ENCODE measurements at regions of chr3 and their contacts with region 1.

Region 1: DNA sequence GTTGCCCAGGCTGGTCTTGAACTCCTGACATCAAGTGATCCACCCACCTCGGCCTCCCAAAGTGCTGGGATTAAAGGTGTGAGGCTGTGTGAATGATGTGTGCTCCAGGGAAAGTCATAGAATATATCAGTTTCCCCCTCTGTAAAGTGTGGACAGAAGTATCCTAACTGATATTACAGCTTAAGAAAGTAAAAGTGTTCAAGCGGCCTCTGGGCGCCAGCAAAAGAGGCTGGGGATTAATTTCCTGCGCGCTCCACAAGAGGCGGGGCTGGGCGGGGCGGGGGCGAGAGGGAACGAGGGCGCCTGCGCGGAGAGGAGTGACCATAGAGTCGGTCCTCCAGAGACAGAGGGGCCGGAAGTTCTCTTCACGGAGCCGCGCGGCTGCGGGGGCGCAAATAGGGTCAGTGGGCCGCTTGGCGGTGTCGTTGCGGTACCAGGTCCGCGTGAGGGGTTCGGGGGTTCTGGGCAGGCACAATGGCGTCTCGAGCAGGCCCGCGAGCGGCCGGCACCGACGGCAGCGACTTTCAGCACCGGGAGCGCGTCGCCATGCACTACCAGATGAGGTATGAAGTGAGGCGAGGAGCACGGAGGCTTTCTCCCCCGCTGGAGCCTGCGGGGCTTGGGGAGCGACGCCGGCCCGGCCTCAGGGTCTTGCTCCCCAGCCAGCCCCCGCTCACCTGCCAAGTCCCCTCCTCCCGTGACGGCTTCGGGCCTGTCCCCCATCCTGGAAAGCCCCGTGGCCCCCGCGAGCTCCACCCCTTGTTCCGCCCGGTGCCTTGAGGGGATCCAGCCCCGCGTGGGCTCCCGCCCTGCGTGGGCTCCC is at the start of gene JAGN1:
- DNase-seq: peak; percentile 87 to 92 (median 89)
- H3K4me3 ChIP-seq: peak within 1 kb of the TSS; percentile 56 to 93
- H3K4me3 Mint-ChIP-seq: peak within 1 kb of the TSS; percentile 94 to 100 (median 98)
- H3K27ac ChIP-seq: peak within 1 kb of the TSS; percentile 100
- H3K27ac Mint-ChIP-seq: peak within 1 kb of the TSS; percentile 99 to 100 (median 99)
- H3K4me1 ChIP-seq: peaks cover 39% of the 10 kb centered on the region
- H3K4me1 Mint-ChIP-seq: peaks cover 22 to 51% (median 34%) of the 10 kb centered on the region in 4 donors
- H3K27me3 ChIP-seq: no peaks in the 10 kb centered on the region
- H3K27me3 Mint-ChIP-seq: no peaks in the 10 kb centered on the region
- total RNA-seq, gene JAGN1: 26.5 to 29.1 TPM

Region 2: DNA sequence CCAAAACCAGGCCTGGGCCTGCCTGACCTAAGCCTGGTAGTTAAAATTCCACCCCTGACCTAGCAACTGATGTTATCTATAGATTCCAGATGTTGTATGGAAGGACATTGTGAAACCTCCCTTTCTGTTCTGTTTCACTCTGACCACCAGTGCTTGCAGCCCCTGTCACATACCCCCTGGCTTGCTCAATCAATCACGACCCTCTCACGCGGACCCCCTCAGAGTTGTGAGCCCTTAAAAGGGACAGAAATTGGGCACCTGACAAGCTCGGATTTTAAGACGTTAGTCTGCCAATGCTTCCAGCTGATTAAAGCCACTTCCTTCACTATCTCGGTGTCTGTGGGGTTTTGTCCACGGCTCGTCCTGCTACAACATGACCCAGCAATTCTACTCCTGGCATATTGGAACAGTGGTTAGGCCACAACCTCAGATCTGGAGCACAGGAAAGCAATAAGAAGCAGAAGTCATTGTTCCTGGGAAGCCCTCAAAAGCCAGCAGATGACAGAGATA is 300.1 kb before region 1 on chr3:
- CTCF ChIA-PET with region 1: no interaction called
- POLR2A ChIA-PET with region 1: no interaction called
- intact Hi-C with region 1: no loop called
- DNase-seq: no peak
- H3K4me3 ChIP-seq: no peak overlapping the region
- H3K4me3 Mint-ChIP-seq: no peak overlapping the region
- H3K27ac ChIP-seq: no peak overlapping the region
- H3K27ac Mint-ChIP-seq: no peak overlapping the region
- H3K4me1 ChIP-seq: no peaks in the 10 kb centered on the region
- H3K4me1 Mint-ChIP-seq: peaks cover 0 to 5% (median 0%) of the 10 kb centered on the region in 4 donors
- H3K27me3 ChIP-seq: no peaks in the 10 kb centered on the region
- H3K27me3 Mint-ChIP-seq: peaks cover 12 to 13% of the 10 kb centered on the region in 2 donors

Region 3: GRCh38 chr3:9649791-9650521 is 240.5 kb before region 1 on chr3:
- CTCF ChIA-PET with region 1: no interaction called
- POLR2A ChIA-PET with region 1: interaction called, 7 read pairs
- intact Hi-C with region 1: loop called (anchors 1 kb)
- DNase-seq: peak in 1 of 5 donors; percentile 46
- H3K4me3 ChIP-seq: peak overlapping the region; percentile 97
- H3K4me3 Mint-ChIP-seq: peak overlapping the region; percentile 91 to 99 (median 96)
- H3K27ac ChIP-seq: peak overlapping the region; percentile 77
- H3K27ac Mint-ChIP-seq: peak overlapping the region; percentile 89 to 97 (median 91)
- H3K4me1 ChIP-seq: peaks cover 37% of the 10 kb centered on the region
- H3K4me1 Mint-ChIP-seq: peaks cover 19 to 50% (median 30%) of the 10 kb centered on the region in 4 donors
- H3K27me3 ChIP-seq: no peaks in the 10 kb centered on the region
- H3K27me3 Mint-ChIP-seq: peaks cover 0 to 1% of the 10 kb centered on the region in 2 donors

Region 4: DNA sequence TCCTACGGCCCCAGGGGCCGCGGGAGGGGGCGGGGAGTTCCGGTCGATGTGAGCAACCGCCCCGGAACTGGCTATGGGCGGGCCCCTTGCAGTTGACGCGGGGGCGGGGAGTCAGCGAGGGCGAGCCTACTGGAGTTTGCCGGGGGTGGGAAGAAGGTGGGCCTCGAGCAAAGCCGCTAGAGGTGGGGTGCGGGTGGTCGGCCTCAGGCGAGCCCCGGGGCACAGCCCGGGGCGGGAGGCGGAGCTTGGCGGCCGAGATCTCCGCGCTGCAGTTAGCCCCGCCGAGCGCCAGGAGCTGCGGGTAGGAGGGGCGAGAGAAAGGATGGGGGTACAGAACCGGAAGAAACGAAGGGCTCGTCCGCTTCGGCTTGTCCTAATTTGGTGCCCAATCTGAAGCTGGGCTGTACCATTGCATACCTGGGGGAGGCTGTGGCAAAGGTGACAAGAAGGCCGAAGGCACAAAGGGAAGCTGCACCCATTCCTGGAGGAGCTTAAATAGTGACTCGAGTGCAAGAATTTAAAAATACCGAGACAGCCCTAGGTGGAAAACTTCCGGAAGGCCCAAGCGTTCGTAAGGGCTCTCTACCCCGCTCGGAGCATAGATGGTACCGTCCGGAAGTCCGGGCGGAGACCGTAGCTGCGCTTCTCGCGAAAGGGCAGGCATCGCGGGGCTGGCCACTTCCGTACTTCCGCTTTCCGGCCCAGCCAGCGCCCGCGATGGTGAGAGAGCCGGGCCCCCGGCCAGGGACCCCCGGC is 97.9 kb before region 1 on chr3 and contains the starts of genes ARPC4 and TADA3:
- CTCF ChIA-PET with region 1: no interaction called
- POLR2A ChIA-PET with region 1: interaction called, 19 read pairs
- intact Hi-C with region 1: loop called (anchors 1 kb)
- DNase-seq: peak; percentile 92 to 97 (median 96)
- H3K4me3 ChIP-seq: peak within 1 kb of the TSS; percentile 91 to 100
- H3K4me3 Mint-ChIP-seq: peak within 1 kb of the TSS; percentile 96 to 99 (median 98)
- H3K27ac ChIP-seq: peak within 1 kb of the TSS; percentile 99
- H3K27ac Mint-ChIP-seq: peak within 1 kb of the TSS; percentile 97 to 99 (median 99)
- H3K4me1 ChIP-seq: peaks cover 63% of the 10 kb centered on the region
- H3K4me1 Mint-ChIP-seq: peaks cover 47 to 80% (median 56%) of the 10 kb centered on the region in 4 donors
- H3K27me3 ChIP-seq: no peaks in the 10 kb centered on the region
- H3K27me3 Mint-ChIP-seq: no peaks in the 10 kb centered on the region
- total RNA-seq, gene ARPC4: 164 to 168 TPM
- total RNA-seq, gene TADA3: 37.6 to 41.4 TPM

Region 5: GRCh38 chr3:9902372-9903237 is 12.1 kb after region 1 on chr3 and contains the start of gene IL17RE:
- CTCF ChIA-PET with region 1: interaction called, 5 read pairs
- POLR2A ChIA-PET with region 1: interaction called, 40 read pairs
- intact Hi-C with region 1: no loop called
- DNase-seq: peak in 3 of 5 donors; percentile 14 to 33 (median 23)
- H3K4me3 ChIP-seq: peak within 1 kb of the TSS in 1 of 2 donors; percentile 17
- H3K4me3 Mint-ChIP-seq: peak within 1 kb of the TSS; percentile 59 to 80 (median 74)
- H3K27ac ChIP-seq: peak within 1 kb of the TSS; percentile 35
- H3K27ac Mint-ChIP-seq: peak within 1 kb of the TSS; percentile 67 to 94 (median 88)
- H3K4me1 ChIP-seq: peaks cover 29% of the 10 kb centered on the region
- H3K4me1 Mint-ChIP-seq: peaks cover 24 to 41% (median 25%) of the 10 kb centered on the region in 4 donors
- H3K27me3 ChIP-seq: no peaks in the 10 kb centered on the region
- H3K27me3 Mint-ChIP-seq: no peaks in the 10 kb centered on the region
- total RNA-seq, gene IL17RE: 1.5 to 2.4 TPM

Region 6: GRCh38 chr3:9946112-9947024 is 55.9 kb after region 1 on chr3:
- CTCF ChIA-PET with region 1: interaction called, 16 read pairs
- POLR2A ChIA-PET with region 1: interaction called, 13 read pairs
- intact Hi-C with region 1: no loop called
- DNase-seq: peak; percentile 80 to 88 (median 84)
- H3K4me3 ChIP-seq: peak overlapping the region in 1 of 2 donors; percentile 45
- H3K4me3 Mint-ChIP-seq: peak overlapping the region; percentile 40 to 83 (median 79)
- H3K27ac ChIP-seq: peak overlapping the region; percentile 70
- H3K27ac Mint-ChIP-seq: peak overlapping the region; percentile 59 to 94 (median 88)
- H3K4me1 ChIP-seq: peaks cover 6% of the 10 kb centered on the region
- H3K4me1 Mint-ChIP-seq: peaks cover 4 to 23% (median 6%) of the 10 kb centered on the region in 4 donors
- H3K27me3 ChIP-seq: no peaks in the 10 kb centered on the region
- H3K27me3 Mint-ChIP-seq: no peaks in the 10 kb centered on the region

Region 7: DNA sequence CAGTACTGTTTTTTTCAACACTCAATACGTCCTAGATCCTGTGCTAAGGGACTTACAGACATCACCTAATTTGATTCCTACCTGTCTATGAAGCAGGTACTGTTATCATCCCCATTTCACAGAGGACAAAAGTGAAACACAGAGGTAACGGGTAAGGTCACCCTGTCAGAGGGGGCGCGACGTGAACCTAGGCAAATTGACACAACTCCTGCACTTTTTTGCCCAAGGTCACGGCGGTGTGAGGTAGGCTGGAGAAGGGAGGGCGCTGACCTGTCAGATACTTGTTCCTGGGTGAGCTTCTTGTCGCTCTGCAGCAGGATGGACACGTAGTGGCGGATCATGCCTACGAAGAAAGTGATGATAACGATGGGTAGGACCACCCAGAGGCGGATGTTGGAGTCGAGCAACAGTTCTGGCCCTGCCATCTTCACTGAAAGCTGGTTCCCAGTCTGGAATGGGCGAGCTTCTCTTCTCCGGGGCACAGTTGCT is 95.8 kb after region 1 on chr3:
- CTCF ChIA-PET with region 1: no interaction called
- POLR2A ChIA-PET with region 1: interaction called, 6 read pairs
- intact Hi-C with region 1: loop called (anchors 1 kb)
- DNase-seq: no peak
- H3K4me3 ChIP-seq: peak overlapping the region; percentile 90 to 91
- H3K4me3 Mint-ChIP-seq: peak overlapping the region; percentile 95 to 99 (median 98)
- H3K27ac ChIP-seq: peak overlapping the region; percentile 96
- H3K27ac Mint-ChIP-seq: peak overlapping the region; percentile 98 to 100 (median 99)
- H3K4me1 ChIP-seq: peaks cover 31% of the 10 kb centered on the region
- H3K4me1 Mint-ChIP-seq: peaks cover 11 to 38% (median 27%) of the 10 kb centered on the region in 4 donors
- H3K27me3 ChIP-seq: no peaks in the 10 kb centered on the region
- H3K27me3 Mint-ChIP-seq: no peaks in the 10 kb centered on the region

Region 8: DNA sequence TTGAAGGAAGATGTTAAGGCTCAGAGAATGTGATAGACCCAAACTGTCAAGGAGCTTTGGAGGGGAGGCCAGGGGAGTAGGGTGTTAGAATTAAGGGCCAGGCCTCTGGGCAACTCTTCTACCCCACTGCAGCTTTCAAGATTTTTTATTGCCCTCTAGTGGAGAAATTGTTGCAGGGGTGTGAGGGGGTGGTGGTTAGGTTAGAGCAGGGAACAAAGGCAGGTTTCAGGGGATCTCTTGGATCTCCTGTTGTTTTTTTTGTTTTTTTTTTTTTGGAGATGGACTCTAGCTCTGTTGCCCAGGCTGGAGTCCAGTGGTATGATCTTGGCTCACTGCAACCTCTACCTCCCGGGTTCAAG is 431.9 kb after region 1 on chr3:
- CTCF ChIA-PET with region 1: interaction called, 5 read pairs
- POLR2A ChIA-PET with region 1: no interaction called
- intact Hi-C with region 1: loop called (anchors 1 kb)
- DNase-seq: peak in 3 of 5 donors; percentile 22 to 33 (median 23)
- H3K4me3 ChIP-seq: no peak overlapping the region
- H3K4me3 Mint-ChIP-seq: peak overlapping the region in 3 of 8 donors; percentile 20 to 92 (median 46)
- H3K27ac ChIP-seq: no peak overlapping the region
- H3K27ac Mint-ChIP-seq: peak overlapping the region in 5 of 7 donors; percentile 81 to 97 (median 86)
- H3K4me1 ChIP-seq: peaks cover 28% of the 10 kb centered on the region
- H3K4me1 Mint-ChIP-seq: peaks cover 18 to 42% (median 29%) of the 10 kb centered on the region in 4 donors
- H3K27me3 ChIP-seq: peaks cover 6% of the 10 kb centered on the region
- H3K27me3 Mint-ChIP-seq: peaks cover 2 to 5% of the 10 kb centered on the region in 2 donors

Measured in CD4-positive, alpha-beta memory T cell (primary cell).